ENCODE measurements at regions of chr4 and their contacts with region 1.

Region 1: GRCh38 chr4:88823058-88823919 is 125.7 kb upstream of the NAP1L5 start:
- DNase-seq: peak; percentile 76
- H3K4me3 Mint-ChIP-seq: peak overlapping the region; percentile 95
- H3K27ac Mint-ChIP-seq: peak overlapping the region; percentile 99
- H3K4me1 Mint-ChIP-seq: peaks cover 48% of the 10 kb centered on the region
- H3K27me3 Mint-ChIP-seq: no peaks in the 10 kb centered on the region

Region 2: DNA sequence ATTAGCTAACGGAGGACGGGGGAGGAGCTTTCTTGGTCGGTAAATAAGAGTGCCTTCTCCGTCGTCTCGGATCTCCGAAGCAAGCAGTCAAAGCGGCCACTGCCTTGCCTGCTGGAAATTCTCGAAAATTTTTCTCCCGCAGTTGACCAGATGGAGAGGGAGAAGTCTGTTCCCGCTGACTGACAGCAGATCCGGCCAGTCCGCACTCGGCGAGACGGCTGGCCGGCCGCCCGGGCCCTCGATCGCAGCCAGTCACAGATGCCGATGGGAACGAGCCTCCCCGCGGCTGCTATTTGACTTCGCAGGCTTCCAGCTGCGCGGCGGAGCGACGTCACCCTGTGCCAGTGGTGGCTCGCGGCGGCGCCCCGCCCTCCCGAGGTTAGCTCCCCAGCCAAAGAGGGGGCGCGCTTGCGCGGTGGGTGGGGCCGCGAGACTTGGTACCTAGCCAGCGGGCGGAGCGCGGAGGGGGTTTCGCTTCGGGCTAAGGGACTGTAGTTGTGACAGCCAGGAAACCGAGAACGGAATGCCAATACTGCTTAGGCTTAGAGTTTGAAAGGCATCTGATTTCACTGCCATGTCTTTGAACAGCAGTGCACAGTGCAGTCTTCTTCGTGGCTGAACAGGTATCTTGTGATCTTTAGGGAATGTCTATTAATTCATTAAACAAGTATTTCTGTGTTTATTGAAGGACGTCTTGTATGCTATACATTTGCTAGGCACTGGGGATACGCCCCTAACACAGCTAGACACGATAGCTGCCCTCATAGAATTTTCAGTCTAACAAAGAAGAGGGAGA is 538.7 kb before region 1 on chr4 and contains the start of gene PPM1K:
- intact Hi-C with region 1: loop called (anchors 2 kb)
- DNase-seq: peak; percentile 99
- H3K4me3 Mint-ChIP-seq: peak within 1 kb of the TSS; percentile 99
- H3K27ac Mint-ChIP-seq: peak within 1 kb of the TSS; percentile 99
- H3K4me1 Mint-ChIP-seq: peaks cover 47% of the 10 kb centered on the region
- H3K27me3 Mint-ChIP-seq: no peaks in the 10 kb centered on the region
- total RNA-seq, gene PPM1K: 37.3 and 39.5 TPM in 2 replicates

Region 3: GRCh38 chr4:88591787-88592599 is 231.3 kb before region 1 on chr4 and contains the start of gene HERC3:
- intact Hi-C with region 1: loop called (anchors 5 kb)
- DNase-seq: peak; percentile 88
- H3K4me3 Mint-ChIP-seq: peak within 1 kb of the TSS; percentile 91
- H3K27ac Mint-ChIP-seq: peak within 1 kb of the TSS; percentile 88
- H3K4me1 Mint-ChIP-seq: peaks cover 35% of the 10 kb centered on the region
- H3K27me3 Mint-ChIP-seq: peaks cover 28% of the 10 kb centered on the region
- total RNA-seq, gene HERC3: 12.8 and 14.2 TPM in 2 replicates

Region 4: DNA sequence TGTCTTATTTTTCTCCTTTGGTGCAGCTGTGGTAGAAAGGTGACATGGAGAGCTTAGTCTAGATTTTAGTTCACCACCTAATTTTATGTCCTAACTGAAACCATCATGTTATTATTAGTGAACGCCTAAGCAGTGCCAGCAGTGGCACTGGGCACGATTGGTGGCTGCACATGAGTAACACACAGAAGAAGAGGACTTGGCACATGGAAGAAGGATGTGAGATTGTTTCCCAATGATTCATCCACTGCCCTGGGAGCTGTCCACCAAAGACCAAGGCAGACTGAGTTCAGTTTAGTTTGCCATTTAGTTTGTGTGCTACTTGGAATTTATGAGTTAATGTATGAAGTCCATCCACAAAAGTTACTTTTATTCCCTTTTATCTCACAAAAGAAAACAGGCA is 57.6 kb before region 1 on chr4:
- intact Hi-C with region 1: no loop called
- DNase-seq: no peak
- H3K4me3 Mint-ChIP-seq: no peak overlapping the region
- H3K27ac Mint-ChIP-seq: no peak overlapping the region
- H3K4me1 Mint-ChIP-seq: peaks cover 11% of the 10 kb centered on the region
- H3K27me3 Mint-ChIP-seq: peaks cover 3% of the 10 kb centered on the region

Region 5: DNA sequence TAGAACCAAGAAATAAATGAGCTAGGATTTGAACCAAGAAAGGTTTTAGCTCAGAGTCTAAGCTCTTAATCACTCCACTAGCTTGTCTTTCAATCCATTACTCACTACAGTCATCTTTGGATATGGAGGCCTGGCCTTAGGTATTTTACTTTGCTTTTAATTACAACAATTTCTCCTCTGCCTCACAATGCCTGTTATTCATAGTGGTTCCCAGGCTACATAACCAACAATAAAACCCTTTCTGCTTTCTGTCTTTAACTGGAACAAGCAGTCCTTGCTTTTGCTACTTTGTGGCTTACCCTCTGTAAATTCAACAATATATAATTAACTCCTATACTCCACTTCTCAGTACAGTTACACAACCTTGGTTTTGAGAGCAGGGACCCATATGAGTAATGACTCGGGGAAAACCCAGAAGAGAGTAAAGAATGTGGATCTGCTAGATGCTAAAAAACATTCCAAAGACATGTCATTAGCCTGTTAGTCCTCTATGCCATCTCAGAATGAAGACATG is 31.0 kb before region 1 on chr4:
- intact Hi-C with region 1: loop called (anchors 1 kb)
- DNase-seq: no peak
- H3K4me3 Mint-ChIP-seq: no peak overlapping the region
- H3K27ac Mint-ChIP-seq: no peak overlapping the region
- H3K4me1 Mint-ChIP-seq: peaks cover 21% of the 10 kb centered on the region
- H3K27me3 Mint-ChIP-seq: peaks cover 21% of the 10 kb centered on the region

Region 6: DNA sequence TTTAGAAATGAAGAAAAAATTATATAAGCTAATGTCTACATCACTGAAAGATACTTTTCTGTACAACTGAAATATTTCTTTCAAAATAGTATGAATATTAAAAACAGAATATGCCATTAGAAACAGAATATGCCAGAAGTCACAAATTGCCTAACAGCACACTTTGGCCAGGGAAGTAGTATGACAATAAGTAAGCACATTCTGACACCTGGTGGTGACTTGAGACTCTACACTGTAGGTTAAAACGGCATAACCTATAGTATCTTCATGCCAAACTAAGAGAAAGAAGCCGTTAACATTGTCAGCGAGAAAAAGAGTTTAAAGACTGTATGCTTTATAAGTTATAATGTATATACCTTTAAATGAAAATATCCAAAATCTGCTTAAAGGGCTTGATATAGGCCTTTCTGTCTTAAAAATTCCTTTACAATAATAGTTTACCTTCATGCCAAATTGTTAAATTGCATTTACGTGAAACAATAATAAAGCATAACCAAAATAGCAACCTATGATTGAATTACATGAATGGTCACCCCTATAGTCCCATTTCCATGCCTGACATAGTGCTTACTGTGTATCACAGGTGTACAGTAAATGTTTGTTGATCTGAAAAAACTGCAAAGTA is 200.9 kb after region 1 on chr4:
- intact Hi-C with region 1: loop called (anchors 1 kb)
- DNase-seq: peak; percentile 42
- H3K4me3 Mint-ChIP-seq: no peak overlapping the region
- H3K27ac Mint-ChIP-seq: no peak overlapping the region
- H3K4me1 Mint-ChIP-seq: no peaks in the 10 kb centered on the region
- H3K27me3 Mint-ChIP-seq: peaks cover 5% of the 10 kb centered on the region